T-cell (primary cell): ENCODE measurements at regions of chr16 and their contacts with region 1.

Region 1: GRCh38 chr16:81940781-81941560 is 70.3 kb downstream of the SDR42E1 start:
- DNase-seq: peak in 1 of 35 experiments; percentile 53
- ATAC-seq: no peak
- H3K4me3 ChIP-seq: no peak overlapping the region
- H3K4me3 Mint-ChIP-seq: no peak overlapping the region
- H3K27ac ChIP-seq: no peak overlapping the region
- H3K27ac Mint-ChIP-seq: no peak overlapping the region
- H3K4me1 ChIP-seq: no peaks in the 10 kb centered on the region
- H3K4me1 Mint-ChIP-seq: no peaks in the 10 kb centered on the region
- H3K27me3 ChIP-seq: no peaks in the 10 kb centered on the region
- H3K27me3 Mint-ChIP-seq: peaks cover 0 to 2% of the 10 kb centered on the region in 2 donors

Region 2: DNA sequence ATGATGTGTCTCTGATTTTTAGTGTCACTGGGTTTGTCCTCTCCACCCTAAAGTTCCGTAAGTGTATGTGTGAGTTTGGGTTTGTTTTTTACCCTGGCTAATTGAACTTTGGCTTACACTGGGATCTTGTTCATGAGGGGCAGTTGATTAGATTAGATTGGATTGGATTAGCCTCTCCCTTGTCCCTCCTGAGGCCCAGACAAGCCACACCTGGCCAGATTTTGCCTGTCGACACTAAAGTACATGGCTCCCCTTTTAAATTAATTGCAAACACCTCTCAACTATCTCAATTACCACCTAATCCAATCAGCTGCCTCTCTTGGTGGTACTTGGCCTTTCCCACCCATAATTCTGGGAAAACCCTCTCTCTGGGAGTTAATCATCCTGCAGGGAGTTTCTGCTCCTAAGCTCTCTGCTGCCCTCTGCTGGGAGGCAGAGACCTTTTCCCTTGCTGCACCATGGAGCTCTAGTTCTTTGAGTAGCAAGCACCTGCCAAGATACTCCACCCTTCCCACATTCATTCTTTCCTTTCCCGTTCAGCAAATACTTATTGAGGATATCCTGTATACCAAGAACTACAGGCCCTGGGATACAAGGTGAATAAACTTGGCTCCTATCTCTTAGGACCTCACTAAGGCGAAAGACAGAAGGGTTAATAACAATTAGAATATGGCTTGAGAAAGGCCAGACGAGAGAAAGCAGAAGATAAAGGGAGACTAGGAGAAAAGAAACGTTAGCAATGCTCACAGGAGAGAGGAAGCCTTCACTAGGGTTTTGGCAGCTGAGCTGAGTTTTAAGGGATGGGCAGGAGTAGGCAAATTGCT is 289.0 kb after region 1 on chr16:
- CTCF ChIA-PET with region 1: interaction called, 6 to 16 read pairs
- POLR2A ChIA-PET with region 1: no interaction called
- DNase-seq: peak in 33 of 35 experiments; percentile 1 to 73 (median 33)
- ATAC-seq: no peak
- H3K4me3 ChIP-seq: no peak overlapping the region
- H3K4me3 Mint-ChIP-seq: no peak overlapping the region
- H3K27ac ChIP-seq: no peak overlapping the region
- H3K27ac Mint-ChIP-seq: no peak overlapping the region
- H3K4me1 ChIP-seq: no peaks in the 10 kb centered on the region
- H3K4me1 Mint-ChIP-seq: no peaks in the 10 kb centered on the region
- H3K27me3 ChIP-seq: no peaks in the 10 kb centered on the region
- H3K27me3 Mint-ChIP-seq: peaks cover 9 to 19% of the 10 kb centered on the region in 2 donors